PC-9 (cell line): ENCODE measurements at regions of chr2 and their contacts with region 1.

Region 1: DNA sequence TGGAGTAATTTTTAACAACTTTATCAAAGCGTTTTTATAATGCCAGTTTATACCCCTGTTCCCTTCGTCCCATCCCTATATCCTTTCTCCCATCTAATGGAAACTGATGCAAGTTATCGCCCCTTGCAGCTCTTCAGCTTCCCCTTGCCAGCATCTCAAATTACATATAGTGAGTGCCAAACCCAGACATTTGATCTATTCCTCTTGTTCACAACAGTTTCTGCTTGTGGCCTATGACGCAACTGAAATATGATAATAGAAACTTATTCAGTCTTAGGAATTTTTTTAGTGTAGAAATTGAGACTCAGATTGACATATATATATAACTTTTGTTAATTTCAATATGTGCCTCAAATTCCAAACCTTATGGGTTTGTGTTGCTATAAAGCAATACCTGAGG is 562.2 kb upstream of the VWC2L start:
- DNase-seq: no peak
- H3K4me3 ChIP-seq: no peak overlapping the region
- H3K27ac ChIP-seq: no peak overlapping the region
- H3K4me1 ChIP-seq: no peaks in the 10 kb centered on the region
- H3K27me3 ChIP-seq: no peaks in the 10 kb centered on the region
- CTCF ChIP-seq: no peak

Region 2: GRCh38 chr2:213559053-213559452 is 289.6 kb before region 1 on chr2:
- CTCF ChIA-PET with region 1: no interaction called
- POLR2A ChIA-PET with region 1: no interaction called
- intact Hi-C with region 1: no loop called
- DNase-seq: no peak
- H3K4me3 ChIP-seq: no peak overlapping the region
- H3K27ac ChIP-seq: no peak overlapping the region
- H3K4me1 ChIP-seq: no peaks in the 10 kb centered on the region
- H3K27me3 ChIP-seq: no peaks in the 10 kb centered on the region
- CTCF ChIP-seq: no peak

Region 3: DNA sequence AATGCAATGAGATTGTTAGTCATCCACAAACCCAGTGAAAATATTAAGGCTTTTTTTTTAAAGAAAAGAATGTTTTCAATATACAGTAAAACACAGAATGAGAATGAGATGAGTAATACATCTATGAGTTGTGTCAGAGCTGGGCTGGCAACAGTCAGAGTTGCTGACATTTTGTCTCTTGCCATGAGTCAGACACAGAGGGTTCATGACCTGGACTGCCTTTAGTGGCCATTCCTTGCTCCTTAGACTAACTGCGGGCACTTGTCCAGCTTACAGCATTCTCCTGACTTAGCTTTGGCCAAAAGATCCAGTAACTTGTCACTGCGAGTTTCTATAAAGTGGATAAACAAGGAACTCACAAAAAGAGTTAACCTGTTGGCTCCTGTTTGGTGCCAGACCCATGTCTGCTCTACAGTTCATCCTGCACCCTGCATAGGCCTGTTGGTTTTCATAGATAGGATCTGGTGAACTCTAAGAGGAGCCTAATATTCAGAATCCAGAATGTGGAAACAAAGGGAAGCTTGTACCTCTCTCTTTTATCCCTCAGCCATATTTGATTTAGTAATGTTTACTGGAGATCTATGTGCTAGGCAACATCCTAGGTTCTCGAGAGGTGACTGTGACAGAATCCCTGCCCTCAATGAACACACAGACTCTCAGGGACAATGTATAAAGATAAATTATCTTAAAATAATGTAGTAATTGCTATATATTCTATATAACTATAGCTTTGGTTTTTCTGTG is 170.8 kb after region 1 on chr2:
- CTCF ChIA-PET with region 1: no interaction called
- POLR2A ChIA-PET with region 1: no interaction called
- intact Hi-C with region 1: loop called (anchors 10 kb)
- DNase-seq: peak; percentile 85 to 96
- H3K4me3 ChIP-seq: no peak overlapping the region
- H3K27ac ChIP-seq: peak overlapping the region; percentile 69
- H3K4me1 ChIP-seq: peaks cover 22% of the 10 kb centered on the region
- H3K27me3 ChIP-seq: no peaks in the 10 kb centered on the region
- CTCF ChIP-seq: no peak